ENCODE measurements at regions of chr16 and their contacts with region 1.

Region 1: GRCh38 chr16:50065624-50066481 is at the start of gene HEATR3:
- DNase-seq: peak; percentile 88
- ATAC-seq: peak; percentile 94
- H3K4me3 ChIP-seq: peak within 1 kb of the TSS; percentile 89
- H3K27ac ChIP-seq: peak within 1 kb of the TSS; percentile 96
- H3K4me1 ChIP-seq: peaks cover 11% of the 10 kb centered on the region
- H3K27me3 ChIP-seq: no peaks in the 10 kb centered on the region
- CTCF ChIP-seq: 0 out of 2 replicates have a peak, but pooled peaks have one; percentile 1
- POLR2A ChIP-seq: 0 out of 2 replicates have a peak, but pooled peaks have one; percentile 11
- RAD21 ChIP-seq: no peak
- total RNA-seq, gene HEATR3: 21.1 and 25.3 TPM in 2 replicates

Region 2: GRCh38 chr16:50038756-50039529 is 26.9 kb before region 1 on chr16:
- CTCF ChIA-PET with region 1: no interaction called
- POLR2A ChIA-PET with region 1: no interaction called
- dilution Hi-C with region 1: no loop called
- in situ Hi-C with region 1: no loop called
- intact Hi-C with region 1: loop called (anchors 2 kb)
- DNase-seq: no peak
- ATAC-seq: no peak
- H3K4me3 ChIP-seq: no peak overlapping the region
- H3K27ac ChIP-seq: no peak overlapping the region
- H3K4me1 ChIP-seq: no peaks in the 10 kb centered on the region
- H3K27me3 ChIP-seq: peaks cover 3% of the 10 kb centered on the region
- CTCF ChIP-seq: no peak
- POLR2A ChIP-seq: no peak
- RAD21 ChIP-seq: no peak

Region 3: GRCh38 chr16:50152807-50153452 is 87.1 kb after region 1 on chr16 and contains the start of gene TENT4B:
- CTCF ChIA-PET with region 1: no interaction called
- POLR2A ChIA-PET with region 1: no interaction called
- dilution Hi-C with region 1: no loop called
- in situ Hi-C with region 1: no loop called
- intact Hi-C with region 1: loop called (anchors 2 kb)
- DNase-seq: peak; percentile 66
- ATAC-seq: peak; percentile 90
- H3K4me3 ChIP-seq: peak within 1 kb of the TSS; percentile 97
- H3K27ac ChIP-seq: peak within 1 kb of the TSS; percentile 98
- H3K4me1 ChIP-seq: peaks cover 5% of the 10 kb centered on the region
- H3K27me3 ChIP-seq: no peaks in the 10 kb centered on the region
- CTCF ChIP-seq: no peak
- POLR2A ChIP-seq: peak; percentile 85
- RAD21 ChIP-seq: no peak
- total RNA-seq, gene TENT4B: 7.0 and 12.5 TPM in 2 replicates

Region 4: GRCh38 chr16:50301626-50302471 is 236.0 kb after region 1 on chr16:
- CTCF ChIA-PET with region 1: no interaction called
- POLR2A ChIA-PET with region 1: no interaction called
- dilution Hi-C with region 1: no loop called
- in situ Hi-C with region 1: no loop called
- intact Hi-C with region 1: loop called (anchors 5 kb)
- DNase-seq: peak; percentile 86
- ATAC-seq: peak; percentile 81
- H3K4me3 ChIP-seq: no peak overlapping the region
- H3K27ac ChIP-seq: peak overlapping the region; percentile 83
- H3K4me1 ChIP-seq: peaks cover 43% of the 10 kb centered on the region
- H3K27me3 ChIP-seq: no peaks in the 10 kb centered on the region
- CTCF ChIP-seq: no peak
- POLR2A ChIP-seq: peak; percentile 40; the same call in 1 of the 2 replicates
- RAD21 ChIP-seq: no peak

Region 5: GRCh38 chr16:50354629-50355456 is 289.0 kb after region 1 on chr16:
- CTCF ChIA-PET with region 1: no interaction called
- POLR2A ChIA-PET with region 1: no interaction called
- dilution Hi-C with region 1: no loop called
- in situ Hi-C with region 1: no loop called
- intact Hi-C with region 1: loop called (anchors 5 kb)
- DNase-seq: no peak
- ATAC-seq: no peak
- H3K4me3 ChIP-seq: no peak overlapping the region
- H3K27ac ChIP-seq: no peak overlapping the region
- H3K4me1 ChIP-seq: no peaks in the 10 kb centered on the region
- H3K27me3 ChIP-seq: no peaks in the 10 kb centered on the region
- CTCF ChIP-seq: peak; percentile 60
- POLR2A ChIP-seq: no peak
- RAD21 ChIP-seq: peak; percentile 50

Region 6: DNA sequence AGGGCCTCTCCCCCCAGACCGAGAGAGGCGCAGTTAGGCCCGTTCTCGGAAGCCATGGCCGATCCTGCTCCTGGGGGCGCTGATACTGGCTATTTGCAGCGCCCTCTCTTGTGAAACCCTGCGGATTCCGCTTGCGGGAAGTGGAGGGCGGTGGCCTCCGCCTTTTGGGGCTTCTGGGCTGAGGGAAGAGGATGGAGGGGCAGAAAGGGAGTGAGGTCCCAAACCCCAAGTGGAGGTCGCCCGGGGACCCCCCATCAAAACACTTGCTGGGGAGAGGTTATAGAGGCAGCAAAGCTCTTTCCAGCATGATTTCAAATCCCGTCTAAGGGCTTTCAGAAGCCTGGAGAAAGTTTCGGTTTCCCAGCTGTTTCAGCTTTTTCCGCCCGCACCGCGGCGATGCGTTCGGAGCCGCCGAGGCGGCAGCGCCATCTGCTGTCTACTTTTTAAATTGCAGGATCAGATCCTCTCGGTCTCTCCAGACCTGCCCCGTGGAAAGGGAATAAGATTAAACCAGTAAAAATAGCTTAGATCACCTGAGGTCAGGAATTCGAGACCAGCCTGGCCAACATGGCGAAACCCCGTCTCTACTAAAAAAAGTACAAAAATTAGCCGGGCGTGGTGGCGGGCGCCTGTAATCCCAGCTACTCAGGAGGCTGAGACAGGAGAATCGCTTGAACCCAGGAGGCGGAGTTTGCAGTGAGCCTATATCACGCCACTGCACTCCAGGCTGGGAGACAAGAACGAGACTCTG is 599.5 kb after region 1 on chr16:
- CTCF ChIA-PET with region 1: interaction called, 3 read pairs
- POLR2A ChIA-PET with region 1: no interaction called
- dilution Hi-C with region 1: no loop called
- in situ Hi-C with region 1: no loop called
- intact Hi-C with region 1: loop called (anchors 1 kb)
- DNase-seq: peak; percentile 57
- ATAC-seq: peak; percentile 98
- H3K4me3 ChIP-seq: peak overlapping the region; percentile 47
- H3K27ac ChIP-seq: no peak overlapping the region
- H3K4me1 ChIP-seq: no peaks in the 10 kb centered on the region
- H3K27me3 ChIP-seq: no peaks in the 10 kb centered on the region; the same call in 1 of the 2 replicates
- CTCF ChIP-seq: peak; percentile 94
- POLR2A ChIP-seq: no peak
- RAD21 ChIP-seq: peak; percentile 83

Region 7: DNA sequence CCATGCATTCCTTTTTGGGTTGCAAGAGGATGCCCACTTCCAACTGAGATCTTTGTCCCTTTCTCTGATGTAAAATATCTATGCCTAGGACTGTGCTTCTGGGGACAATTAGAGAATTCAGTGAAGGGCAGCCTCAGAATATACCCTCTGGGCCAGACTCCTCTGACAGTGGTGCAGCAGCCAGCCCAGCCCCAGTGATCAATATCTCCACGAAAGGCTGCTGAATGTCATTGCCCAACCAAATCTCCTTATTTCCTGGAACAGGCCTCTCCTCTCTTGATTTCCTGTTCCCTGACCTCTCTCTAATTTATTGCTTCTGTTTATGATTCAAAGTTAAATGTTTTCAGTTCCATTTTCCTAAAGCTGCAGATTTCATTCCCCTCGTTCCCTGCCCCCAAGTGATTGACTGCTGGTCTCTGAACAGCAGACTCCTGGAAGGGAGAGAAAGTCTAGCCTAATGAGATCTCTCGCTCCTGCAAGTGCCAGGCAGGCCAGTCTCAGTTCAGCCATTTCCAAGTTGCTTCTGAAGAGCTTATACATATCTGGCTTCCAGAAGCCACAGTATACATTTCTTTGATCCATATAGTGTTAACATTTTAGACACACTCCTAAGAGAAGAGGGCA is 1189.6 kb after region 1 on chr16:
- CTCF ChIA-PET with region 1: no interaction called
- POLR2A ChIA-PET with region 1: no interaction called
- dilution Hi-C with region 1: no loop called
- in situ Hi-C with region 1: no loop called
- intact Hi-C with region 1: no loop called
- DNase-seq: no peak
- ATAC-seq: no peak
- H3K4me3 ChIP-seq: no peak overlapping the region
- H3K27ac ChIP-seq: no peak overlapping the region
- H3K4me1 ChIP-seq: no peaks in the 10 kb centered on the region
- H3K27me3 ChIP-seq: no peaks in the 10 kb centered on the region
- CTCF ChIP-seq: no peak
- POLR2A ChIP-seq: no peak
- RAD21 ChIP-seq: no peak

Measured in IMR-90 (cell line).